Posterior vena cava (tissue), 2 donors: ENCODE measurements at regions of chr3 and their contacts with region 1.

Region 1: GRCh38 chr3:16056210-16056607 is 118.3 kb upstream of the GALNT15 start:
- DNase-seq: no peak

Region 2: DNA sequence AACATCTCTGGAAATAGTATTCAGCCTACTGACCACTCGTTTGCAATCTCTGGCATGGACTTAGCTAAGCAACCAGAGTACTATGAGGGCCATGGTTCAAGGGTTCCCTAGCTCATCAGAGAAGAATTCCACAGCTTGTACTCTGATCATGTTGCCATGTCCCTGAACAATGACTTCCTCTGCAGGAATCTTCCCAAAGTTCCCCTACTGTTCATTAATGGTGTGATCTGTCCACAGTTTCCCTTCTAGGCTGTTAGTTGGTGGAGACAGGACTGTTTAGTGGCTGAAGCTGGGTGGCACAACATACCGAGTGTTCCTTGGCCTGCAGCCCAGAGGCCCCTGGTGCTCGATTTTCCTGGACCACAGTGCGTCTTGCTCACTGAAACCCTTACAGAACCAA is 73.9 kb after region 1 on chr3:
- intact Hi-C with region 1: loop called in 1 of 2 experiments (anchors 10 kb)
- DNase-seq: no peak